Heart right ventricle (tissue), 16 donors: ENCODE measurements at regions of chr4 and their contacts with region 1.

Region 1: DNA sequence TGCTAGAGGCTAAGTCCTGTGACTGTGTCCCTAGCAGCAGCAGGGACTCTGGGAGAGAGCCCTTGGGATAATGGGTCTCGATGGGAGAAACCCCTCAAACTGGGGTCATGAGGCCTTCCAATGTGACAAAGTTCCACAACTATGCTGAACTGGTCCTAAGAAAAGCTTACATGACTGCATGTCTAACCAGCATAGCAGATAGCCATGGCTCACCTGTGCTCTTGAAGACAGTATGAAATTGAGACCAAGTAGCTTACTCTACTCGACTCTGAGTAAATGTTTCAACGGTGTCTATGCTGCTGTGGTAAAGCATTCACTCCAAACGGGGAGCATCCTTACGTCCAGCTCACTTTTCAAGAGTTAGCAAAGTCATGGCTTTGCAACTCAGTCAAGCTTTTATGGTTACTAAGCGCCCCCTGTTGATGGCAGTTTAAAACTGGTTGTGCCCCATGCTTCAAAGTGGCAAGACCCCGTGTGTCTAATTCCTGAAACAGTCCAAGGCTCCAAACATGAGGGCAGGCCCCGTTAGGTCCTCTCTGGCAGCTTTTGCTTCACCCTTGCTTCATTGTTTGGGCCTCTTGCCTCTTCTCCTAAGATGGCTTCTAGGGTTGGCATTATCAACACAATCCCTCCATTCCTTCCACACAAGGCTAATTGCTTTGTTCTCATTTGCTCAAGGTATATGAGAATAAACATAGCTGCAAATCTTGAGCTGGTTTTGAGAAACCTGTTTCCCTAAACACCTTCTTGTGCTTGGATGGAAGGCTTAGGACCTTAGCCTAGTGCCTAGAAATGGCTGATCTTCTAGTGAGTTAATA is 46.6 kb downstream of the CCNG2 start:
- DNase-seq: peak in 1 of 2 donors; percentile 77
- ATAC-seq: peak in 7 of 8 donors; percentile 59 to 85 (median 76)
- H3K4me3 ChIP-seq: no peak overlapping the region
- H3K27ac ChIP-seq: no peak overlapping the region
- H3K4me1 ChIP-seq: peaks cover 0 to 6% (median 0%) of the 10 kb centered on the region in 9 donors
- H3K27me3 ChIP-seq: no peaks in the 10 kb centered on the region
- CTCF ChIP-seq: peak; percentile 48 to 84 (median 78)

Region 2: DNA sequence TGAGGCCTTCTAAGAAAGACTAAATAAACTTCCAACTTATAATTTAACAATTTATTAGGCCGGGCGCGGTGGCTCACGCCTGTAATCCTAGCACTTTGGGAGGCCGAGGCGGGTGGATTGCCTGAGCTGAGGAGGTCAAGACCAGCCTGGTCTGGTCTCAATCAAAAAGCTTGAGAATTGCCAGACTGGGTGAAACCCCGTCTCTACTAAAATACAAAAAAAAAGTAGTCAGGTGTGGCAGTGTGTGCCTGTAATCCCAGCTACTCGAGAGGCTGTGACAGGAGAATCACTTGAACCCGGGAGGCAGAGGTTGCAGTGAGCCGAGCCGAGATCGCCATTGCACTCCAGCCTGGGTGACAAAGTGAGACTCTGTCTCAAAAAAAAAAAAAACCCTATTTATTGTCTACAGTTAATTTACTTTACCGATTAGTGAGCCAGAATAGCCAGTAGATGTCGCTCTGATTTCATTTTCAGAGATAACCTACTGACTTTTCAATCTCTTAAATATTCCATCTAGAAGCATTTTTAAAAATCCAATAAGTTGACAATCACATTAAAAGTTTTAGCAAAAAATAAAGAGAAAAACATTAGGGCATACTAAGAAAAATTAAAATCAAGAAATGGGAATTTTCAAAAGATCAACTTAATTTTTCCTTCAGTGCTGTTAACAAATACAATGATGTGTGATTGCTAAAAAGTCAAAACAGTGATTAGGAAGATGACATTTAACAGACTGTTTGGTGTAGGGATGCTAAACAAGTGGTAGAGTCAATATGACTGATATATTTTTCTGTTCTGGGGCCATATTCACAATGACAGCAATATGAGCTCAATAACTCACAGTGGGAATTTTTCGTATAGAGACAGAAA is 772.8 kb before region 1 on chr4:
- intact Hi-C with region 1: loop called in 1 of 10 experiments (anchors 10 kb)
- DNase-seq: no peak
- ATAC-seq: no peak
- H3K4me3 ChIP-seq: no peak overlapping the region
- H3K27ac ChIP-seq: no peak overlapping the region
- H3K4me1 ChIP-seq: peaks cover 0 to 13% (median 0%) of the 10 kb centered on the region in 9 donors
- H3K27me3 ChIP-seq: peaks cover 0 to 10% (median 5%) of the 10 kb centered on the region in 7 donors
- CTCF ChIP-seq: peak; percentile 24 to 83 (median 66)

Region 3: DNA sequence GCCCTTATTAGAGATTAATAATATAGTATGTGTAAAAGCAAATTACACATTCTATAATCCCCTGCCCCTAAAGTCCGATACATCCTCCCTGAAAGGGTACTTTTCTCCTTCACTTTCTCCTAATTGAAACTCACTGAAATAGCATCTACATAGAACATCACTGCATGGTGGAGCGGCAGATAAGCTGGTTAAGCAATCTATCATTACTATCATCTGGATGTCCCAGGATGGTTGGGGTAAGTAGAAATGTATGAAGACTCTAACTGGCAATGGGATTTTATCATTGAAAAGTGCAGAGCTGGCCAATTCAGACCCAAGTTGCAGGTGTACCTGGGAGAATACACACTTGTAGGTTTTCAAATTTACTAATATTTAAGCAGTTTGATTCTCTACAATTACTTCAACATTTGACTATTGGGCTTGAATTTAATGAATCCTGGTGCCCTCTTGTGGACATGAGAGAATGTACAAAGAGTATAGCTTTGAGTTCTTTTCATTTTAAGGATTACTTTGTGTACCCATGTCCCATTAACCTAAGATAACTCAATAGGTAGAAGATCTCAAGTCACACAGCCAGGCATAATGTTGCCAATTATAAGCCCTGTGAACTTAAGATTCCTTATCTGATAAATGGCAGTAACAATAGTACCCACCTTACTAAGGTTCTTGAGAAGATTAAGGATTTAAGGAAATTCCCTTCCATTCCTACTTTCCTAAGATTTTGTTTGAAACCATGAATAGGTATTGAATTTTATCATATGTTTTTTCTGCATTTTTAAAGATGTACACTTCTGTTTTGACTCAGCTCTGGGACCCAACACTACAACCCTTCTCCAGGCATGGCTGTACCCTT is 698.8 kb before region 1 on chr4:
- intact Hi-C with region 1: loop called in 9 of 10 experiments (anchors 2 to 10 kb)
- DNase-seq: no peak
- ATAC-seq: peak in 4 of 8 donors; percentile 33 to 63 (median 52)
- H3K4me3 ChIP-seq: no peak overlapping the region
- H3K27ac ChIP-seq: no peak overlapping the region
- H3K4me1 ChIP-seq: no peaks in the 10 kb centered on the region
- H3K27me3 ChIP-seq: peaks cover 0 to 5% (median 0%) of the 10 kb centered on the region in 7 donors
- CTCF ChIP-seq: peak; percentile 32 to 79 (median 71)

Region 4: GRCh38 chr4:77044461-77045150 is 159.0 kb before region 1 on chr4:
- intact Hi-C with region 1: loop called in 3 of 10 experiments (anchors 5 kb)
- DNase-seq: no peak
- ATAC-seq: peak in 6 of 8 donors; percentile 11 to 50 (median 24)
- H3K4me3 ChIP-seq: no peak overlapping the region
- H3K27ac ChIP-seq: peak overlapping the region in 1 of 10 donors; percentile 3
- H3K4me1 ChIP-seq: peaks cover 0 to 24% (median 0%) of the 10 kb centered on the region in 9 donors
- H3K27me3 ChIP-seq: no peaks in the 10 kb centered on the region
- CTCF ChIP-seq: peak; percentile 33 to 67 (median 53)

Region 5: GRCh38 chr4:77052352-77052751 is 151.2 kb before region 1 on chr4:
- intact Hi-C with region 1: loop called in 7 of 10 experiments (anchors 2 to 10 kb)
- DNase-seq: peak; percentile 25 to 31
- ATAC-seq: peak in 3 of 8 donors; percentile 21 to 37 (median 35)
- H3K4me3 ChIP-seq: no peak overlapping the region
- H3K27ac ChIP-seq: no peak overlapping the region
- H3K4me1 ChIP-seq: peaks cover 0 to 16% (median 9%) of the 10 kb centered on the region in 9 donors
- H3K27me3 ChIP-seq: no peaks in the 10 kb centered on the region
- CTCF ChIP-seq: peak in 8 of 9 donors; percentile 28 to 66 (median 50)

Region 6: DNA sequence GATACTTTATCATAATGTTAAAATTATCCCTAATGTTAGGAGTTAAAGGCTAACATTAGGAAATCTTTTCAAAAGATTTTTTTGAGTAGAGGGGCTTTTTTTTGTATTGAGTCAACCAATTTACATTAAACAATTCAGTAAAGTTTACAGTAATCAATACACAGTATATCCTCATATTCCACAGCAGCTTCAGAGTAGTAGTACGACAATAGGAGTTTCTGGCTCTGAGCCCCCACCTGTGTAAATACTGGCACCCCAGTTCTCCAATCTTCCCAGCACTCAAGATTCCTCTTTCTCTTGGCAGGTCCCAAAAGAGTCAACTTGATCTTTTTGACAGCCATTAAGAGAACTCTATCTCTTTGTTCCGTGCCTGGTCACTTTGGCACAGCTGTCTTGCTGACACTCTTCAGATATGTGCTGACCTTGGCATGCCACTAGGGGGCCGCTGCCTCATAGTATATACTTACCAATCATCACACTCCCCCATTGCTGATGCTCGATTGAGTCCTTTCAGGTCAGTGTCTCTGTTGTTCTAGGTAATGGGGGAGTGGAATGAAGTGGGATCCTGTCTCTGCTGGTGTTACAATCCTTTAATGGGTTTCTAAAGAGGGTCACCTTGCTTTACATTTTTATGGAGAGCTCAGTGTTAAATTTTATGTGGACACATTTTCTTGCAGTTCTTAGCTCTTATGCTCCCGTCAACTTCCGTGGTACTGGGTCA is 108.3 kb before region 1 on chr4:
- intact Hi-C with region 1: loop called in 9 of 10 experiments (anchors 2 to 10 kb)
- DNase-seq: peak; percentile 70 to 82
- ATAC-seq: peak; percentile 92 to 98 (median 96)
- H3K4me3 ChIP-seq: no peak overlapping the region
- H3K27ac ChIP-seq: no peak overlapping the region
- H3K4me1 ChIP-seq: peaks cover 0 to 28% (median 10%) of the 10 kb centered on the region in 9 donors
- H3K27me3 ChIP-seq: no peaks in the 10 kb centered on the region
- CTCF ChIP-seq: peak; percentile 71 to 93 (median 86)

Region 7: GRCh38 chr4:77248810-77249209 is 45.2 kb after region 1 on chr4:
- intact Hi-C with region 1: no loop called
- DNase-seq: no peak
- ATAC-seq: no peak
- H3K4me3 ChIP-seq: no peak overlapping the region
- H3K27ac ChIP-seq: no peak overlapping the region
- H3K4me1 ChIP-seq: no peaks in the 10 kb centered on the region
- H3K27me3 ChIP-seq: peaks cover 0 to 5% (median 0%) of the 10 kb centered on the region in 7 donors
- CTCF ChIP-seq: no peak